ENCODE measurements at regions of chr7 and their contacts with region 1.

Region 1: GRCh38 chr7:129376076-129376777 is 58.0 kb upstream of the STRIP2 start:
- DNase-seq: peak; percentile 80
- ATAC-seq: peak; percentile 78
- H3K4me3 Mint-ChIP-seq: no peak overlapping the region
- H3K27ac Mint-ChIP-seq: no peak overlapping the region
- H3K4me1 Mint-ChIP-seq: peaks cover 22% of the 10 kb centered on the region
- H3K27me3 Mint-ChIP-seq: no peaks in the 10 kb centered on the region
- CTCF ChIP-seq: peak; percentile 73

Region 2: DNA sequence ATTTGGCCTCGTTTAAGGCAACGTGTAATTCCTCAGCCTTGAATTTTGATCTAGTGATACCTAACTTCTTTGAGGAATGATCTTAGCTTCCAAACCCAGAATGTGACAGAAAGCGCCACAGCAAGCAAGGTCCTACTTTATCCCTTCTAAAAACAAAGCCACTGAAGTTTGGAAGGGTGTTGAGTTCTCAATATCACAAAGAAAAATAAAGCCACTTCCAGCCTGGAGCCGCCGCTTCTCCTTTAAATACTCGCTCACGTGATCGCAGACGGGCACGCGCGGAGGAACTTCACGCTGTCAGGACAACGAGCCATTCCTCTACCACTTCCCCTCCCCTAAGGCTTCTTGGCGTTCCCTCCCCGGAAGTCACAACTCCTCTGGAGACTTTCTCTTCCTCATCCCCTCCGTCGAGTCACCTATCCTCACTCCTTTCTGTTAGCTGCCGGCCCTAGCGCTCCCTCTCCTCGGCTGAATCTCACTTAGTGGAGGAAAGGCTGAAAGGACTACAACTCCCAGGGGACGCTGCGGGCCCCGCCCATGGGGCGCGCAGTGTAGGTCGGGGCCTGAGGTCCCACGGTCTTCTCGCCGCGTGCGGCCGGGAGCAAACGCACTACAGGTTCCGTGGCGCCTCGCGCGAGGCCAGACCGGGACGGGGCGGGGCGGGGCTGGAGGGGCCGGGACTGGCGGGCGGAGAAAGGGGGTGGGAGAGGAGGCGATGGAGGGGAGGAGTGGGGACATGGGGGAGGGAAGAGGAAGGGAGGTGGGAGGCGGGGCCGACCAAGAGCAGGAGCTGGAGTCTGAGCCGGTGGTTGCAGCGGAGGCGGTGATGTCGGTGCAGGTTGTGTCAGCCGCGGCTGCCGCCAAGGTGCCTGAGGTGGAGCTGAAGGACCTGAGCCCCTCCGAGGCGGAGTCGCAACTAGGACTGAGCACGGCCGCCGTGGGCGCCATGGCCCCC is 151.7 kb before region 1 on chr7 and contains the start of gene AHCYL2:
- CTCF ChIA-PET with region 1: interaction called, 20 read pairs
- POLR2A ChIA-PET with region 1: no interaction called
- intact Hi-C with region 1: no loop called
- DNase-seq: peak; percentile 98
- ATAC-seq: peak; percentile 93
- H3K4me3 Mint-ChIP-seq: peak within 1 kb of the TSS; percentile 79
- H3K27ac Mint-ChIP-seq: peak within 1 kb of the TSS; percentile 91
- H3K4me1 Mint-ChIP-seq: peaks cover 25% of the 10 kb centered on the region
- H3K27me3 Mint-ChIP-seq: no peaks in the 10 kb centered on the region
- CTCF ChIP-seq: no peak
- total RNA-seq, gene AHCYL2: 8.1 to 9.6 TPM

Region 3: GRCh38 chr7:129277629-129278028 is 98.6 kb before region 1 on chr7:
- CTCF ChIA-PET with region 1: no interaction called
- POLR2A ChIA-PET with region 1: no interaction called
- intact Hi-C with region 1: no loop called
- DNase-seq: no peak
- ATAC-seq: no peak
- H3K4me3 Mint-ChIP-seq: no peak overlapping the region
- H3K27ac Mint-ChIP-seq: no peak overlapping the region
- H3K4me1 Mint-ChIP-seq: peaks cover 5% of the 10 kb centered on the region
- H3K27me3 Mint-ChIP-seq: no peaks in the 10 kb centered on the region
- CTCF ChIP-seq: no peak

Region 4: DNA sequence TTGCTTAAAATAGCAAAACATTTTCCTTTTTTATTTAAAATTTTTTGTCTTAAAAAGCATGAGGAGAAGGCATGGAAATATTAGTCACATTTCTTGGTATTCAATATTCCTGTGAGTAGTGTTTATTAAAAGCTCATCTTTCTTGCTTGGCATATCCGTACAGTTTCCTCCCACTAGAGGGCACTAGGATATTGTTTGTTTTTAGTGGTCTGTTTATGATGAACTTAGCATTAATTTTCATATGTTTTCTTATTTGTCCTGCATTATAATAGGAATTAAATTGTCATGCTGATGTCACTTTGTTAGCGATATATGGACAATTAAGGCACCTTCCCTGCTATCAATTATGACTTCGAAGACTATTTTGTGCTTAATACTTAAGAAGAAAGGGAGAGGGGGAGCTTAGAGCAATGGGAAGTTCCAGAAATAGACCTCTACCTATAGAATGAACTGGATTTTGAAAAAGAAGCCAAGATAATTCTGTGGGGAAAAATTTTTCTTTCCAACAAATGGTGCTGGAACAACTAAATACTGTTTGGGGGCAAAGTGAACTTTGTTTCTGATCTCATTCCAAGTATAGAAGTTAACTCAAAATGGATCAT is 33.0 kb before region 1 on chr7:
- CTCF ChIA-PET with region 1: interaction called, 54 read pairs
- POLR2A ChIA-PET with region 1: no interaction called
- intact Hi-C with region 1: no loop called
- DNase-seq: peak; percentile 16
- ATAC-seq: peak; percentile 50
- H3K4me3 Mint-ChIP-seq: no peak overlapping the region
- H3K27ac Mint-ChIP-seq: no peak overlapping the region
- H3K4me1 Mint-ChIP-seq: peaks cover 31% of the 10 kb centered on the region
- H3K27me3 Mint-ChIP-seq: no peaks in the 10 kb centered on the region
- CTCF ChIP-seq: peak; percentile 83

Region 5: GRCh38 chr7:129356176-129356575 is 20.1 kb before region 1 on chr7:
- CTCF ChIA-PET with region 1: interaction called, 71 read pairs
- POLR2A ChIA-PET with region 1: no interaction called
- intact Hi-C with region 1: no loop called
- DNase-seq: no peak
- ATAC-seq: no peak
- H3K4me3 Mint-ChIP-seq: no peak overlapping the region
- H3K27ac Mint-ChIP-seq: no peak overlapping the region
- H3K4me1 Mint-ChIP-seq: peaks cover 5% of the 10 kb centered on the region
- H3K27me3 Mint-ChIP-seq: no peaks in the 10 kb centered on the region
- CTCF ChIP-seq: no peak

Region 6: GRCh38 chr7:129389829-129390228 is 13.6 kb after region 1 on chr7:
- CTCF ChIA-PET with region 1: interaction called, 40 read pairs
- POLR2A ChIA-PET with region 1: interaction called, 3 read pairs
- intact Hi-C with region 1: no loop called
- DNase-seq: no peak
- ATAC-seq: no peak
- H3K4me3 Mint-ChIP-seq: no peak overlapping the region
- H3K27ac Mint-ChIP-seq: no peak overlapping the region
- H3K4me1 Mint-ChIP-seq: peaks cover 4% of the 10 kb centered on the region
- H3K27me3 Mint-ChIP-seq: no peaks in the 10 kb centered on the region
- CTCF ChIP-seq: no peak

Region 7: DNA sequence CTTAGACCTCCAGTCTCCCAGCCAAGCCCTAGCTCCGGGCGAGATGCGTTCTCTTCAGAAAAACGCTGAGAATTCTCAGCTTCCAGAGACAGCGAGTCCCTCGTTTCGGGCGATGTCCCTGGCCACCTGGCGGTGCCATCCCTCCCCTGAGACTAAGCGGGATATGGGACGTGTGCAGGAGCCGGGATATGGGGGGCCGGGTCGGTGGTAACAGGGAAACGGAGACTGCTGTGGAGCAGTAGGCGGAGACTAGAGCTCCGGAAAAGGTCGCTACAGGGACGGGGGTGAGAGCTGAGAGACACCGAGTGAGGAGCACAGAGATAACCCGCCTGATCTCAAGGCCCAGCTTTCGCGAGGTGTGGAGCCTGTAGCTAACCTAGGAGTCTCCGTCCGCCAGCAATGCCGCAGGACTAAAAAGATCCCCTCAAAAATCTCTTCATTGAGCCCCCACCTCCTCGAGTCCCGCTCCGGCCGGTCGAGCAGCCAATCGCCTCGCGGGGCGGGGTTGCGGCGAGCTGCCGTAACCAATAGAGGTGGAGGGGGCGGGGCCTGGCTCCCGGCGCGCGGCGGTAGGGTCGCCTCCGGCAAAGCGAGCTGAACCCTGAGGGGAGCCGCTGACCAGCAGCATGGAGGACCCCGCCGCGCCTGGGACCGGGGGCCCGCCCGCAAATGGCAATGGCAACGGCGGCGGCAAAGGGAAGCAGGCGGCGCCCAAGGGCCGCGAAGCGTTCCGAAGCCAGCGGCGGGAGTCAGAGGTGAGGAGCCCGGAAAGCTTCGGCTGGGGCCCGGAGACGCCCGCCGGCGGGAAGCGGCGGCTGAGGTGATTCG is 57.8 kb after region 1 on chr7 and contains the start of gene STRIP2:
- CTCF ChIA-PET with region 1: interaction called, 13 read pairs
- POLR2A ChIA-PET with region 1: interaction called, 3 read pairs
- intact Hi-C with region 1: no loop called
- DNase-seq: peak; percentile 95
- ATAC-seq: peak; percentile 89
- H3K4me3 Mint-ChIP-seq: peak within 1 kb of the TSS; percentile 75
- H3K27ac Mint-ChIP-seq: peak within 1 kb of the TSS; percentile 76
- H3K4me1 Mint-ChIP-seq: peaks cover 33% of the 10 kb centered on the region
- H3K27me3 Mint-ChIP-seq: peaks cover 24% of the 10 kb centered on the region
- CTCF ChIP-seq: peak; percentile 5
- total RNA-seq, gene STRIP2: 12.2 to 13.1 TPM

Region 8: DNA sequence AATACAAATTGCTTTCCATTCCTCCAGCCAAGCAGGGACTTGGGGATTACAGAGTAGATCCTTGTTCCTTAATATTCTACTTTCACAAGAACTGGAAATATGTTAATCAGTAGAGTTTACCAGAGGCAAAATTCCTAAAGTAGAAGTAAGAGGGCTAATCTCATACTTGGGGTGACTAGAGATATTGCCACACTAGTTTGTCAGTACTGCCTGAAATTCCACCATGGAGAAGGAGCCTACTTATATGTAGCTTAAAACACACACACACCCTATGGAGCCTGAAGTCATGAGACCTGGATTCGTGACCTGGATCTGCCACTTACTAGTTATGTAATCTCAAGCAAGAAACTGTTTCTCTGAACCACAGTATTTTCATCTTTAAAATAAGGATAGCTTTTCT is 91.9 kb after region 1 on chr7:
- CTCF ChIA-PET with region 1: interaction called, 141 read pairs
- POLR2A ChIA-PET with region 1: no interaction called
- intact Hi-C with region 1: no loop called
- DNase-seq: no peak
- ATAC-seq: no peak
- H3K4me3 Mint-ChIP-seq: no peak overlapping the region
- H3K27ac Mint-ChIP-seq: no peak overlapping the region
- H3K4me1 Mint-ChIP-seq: peaks cover 4% of the 10 kb centered on the region
- H3K27me3 Mint-ChIP-seq: no peaks in the 10 kb centered on the region
- CTCF ChIP-seq: no peak

Region 9: DNA sequence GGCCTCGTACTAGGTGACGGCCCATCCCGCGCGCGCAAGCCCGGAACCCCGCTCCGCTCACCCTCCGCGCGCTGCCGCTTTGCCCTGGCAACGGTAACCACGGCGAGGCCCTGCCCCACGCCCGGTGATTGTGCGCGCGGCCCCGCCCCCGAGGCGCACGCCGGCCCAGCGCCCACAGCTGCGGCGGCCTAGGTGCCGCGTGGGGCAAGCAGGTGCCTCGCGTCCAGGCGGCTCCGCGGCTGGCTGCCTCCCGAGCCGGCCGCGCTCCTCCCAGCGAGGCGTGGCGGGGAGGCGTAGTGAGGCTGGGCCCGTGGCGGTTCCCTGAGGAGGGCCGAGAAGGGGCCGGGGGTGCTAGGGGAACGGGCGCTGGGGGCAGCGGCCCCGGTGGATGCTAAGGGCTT is 126.1 kb after region 1 on chr7 and contains the start of gene SMKR1:
- CTCF ChIA-PET with region 1: no interaction called
- POLR2A ChIA-PET with region 1: no interaction called
- intact Hi-C with region 1: no loop called
- DNase-seq: peak; percentile 86
- ATAC-seq: peak; percentile 96
- H3K4me3 Mint-ChIP-seq: peak within 1 kb of the TSS; percentile 74
- H3K27ac Mint-ChIP-seq: peak within 1 kb of the TSS; percentile 48
- H3K4me1 Mint-ChIP-seq: peaks cover 13% of the 10 kb centered on the region
- H3K27me3 Mint-ChIP-seq: no peaks in the 10 kb centered on the region
- CTCF ChIP-seq: no peak
- total RNA-seq, gene SMKR1: 2.6 to 3.6 TPM

Measured in activated CD8-positive, alpha-beta T cell treated with anti-CD3 and anti-CD28 coated beads for 36 hours (primary cell).